ENCODE measurements at regions of chr1 and their contacts with region 1.

Region 1: DNA sequence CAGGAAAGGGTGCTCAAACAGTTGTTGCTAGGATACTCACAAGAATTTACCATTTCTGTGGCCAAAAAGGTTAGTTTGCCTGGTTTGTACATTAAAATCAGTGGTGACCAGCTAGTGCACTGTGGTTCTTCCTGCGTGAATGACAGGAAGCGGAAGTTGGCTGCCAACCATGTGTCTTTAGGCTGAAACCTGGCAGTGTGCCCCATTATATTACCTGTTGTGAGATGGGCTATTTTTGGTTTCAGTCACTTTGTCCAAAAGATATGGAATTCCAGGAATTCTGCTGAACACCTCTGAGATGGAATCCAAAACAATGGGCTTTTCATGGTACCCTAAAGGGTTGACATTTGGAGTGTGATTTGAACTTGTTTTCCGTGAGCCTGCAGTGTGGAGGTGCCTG is 13.6 kb downstream of the MAP3K21 start:
- DNase-seq: peak; percentile 50
- H3K4me3 Mint-ChIP-seq: no peak overlapping the region
- H3K27ac Mint-ChIP-seq: no peak overlapping the region
- H3K4me1 Mint-ChIP-seq: peaks cover 12% of the 10 kb centered on the region
- H3K27me3 Mint-ChIP-seq: no peaks in the 10 kb centered on the region
- CTCF ChIP-seq: no peak

Region 2: DNA sequence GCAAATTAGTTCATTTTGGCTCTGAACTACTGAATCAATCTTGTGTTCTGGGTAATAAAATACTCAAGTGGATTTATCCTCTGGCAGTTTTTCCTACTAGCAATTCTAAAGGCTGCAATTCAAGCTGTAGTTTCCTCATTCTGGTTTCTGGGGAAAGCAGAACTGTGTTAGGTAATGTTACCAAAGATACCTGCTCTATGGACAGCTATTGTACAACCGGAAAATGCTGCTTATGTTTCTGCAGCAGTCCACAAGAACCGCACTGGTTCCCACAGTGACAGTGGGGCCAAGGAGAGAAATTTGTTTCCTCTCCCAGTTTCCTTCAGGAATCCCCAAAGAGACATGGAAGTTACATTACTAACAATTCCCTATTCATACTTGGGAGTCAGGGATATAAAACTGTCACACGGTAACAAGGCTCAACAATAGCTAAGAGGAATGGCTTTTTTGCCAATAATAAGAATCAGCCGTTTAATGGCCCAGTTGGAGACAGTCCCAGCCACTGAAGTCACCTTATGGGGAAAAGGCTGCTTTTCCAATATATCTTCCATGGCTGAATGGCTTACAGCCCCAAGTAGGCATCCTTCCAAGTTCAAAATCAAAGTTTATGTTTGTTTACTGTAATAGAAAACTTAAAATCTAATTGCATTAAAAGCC is 98.2 kb before region 1 on chr1:
- CTCF ChIA-PET with region 1: no interaction called
- POLR2A ChIA-PET with region 1: no interaction called
- intact Hi-C with region 1: no loop called
- DNase-seq: no peak
- H3K4me3 Mint-ChIP-seq: no peak overlapping the region
- H3K27ac Mint-ChIP-seq: no peak overlapping the region
- H3K4me1 Mint-ChIP-seq: peaks cover 9% of the 10 kb centered on the region
- H3K27me3 Mint-ChIP-seq: no peaks in the 10 kb centered on the region
- CTCF ChIP-seq: no peak

Region 3: DNA sequence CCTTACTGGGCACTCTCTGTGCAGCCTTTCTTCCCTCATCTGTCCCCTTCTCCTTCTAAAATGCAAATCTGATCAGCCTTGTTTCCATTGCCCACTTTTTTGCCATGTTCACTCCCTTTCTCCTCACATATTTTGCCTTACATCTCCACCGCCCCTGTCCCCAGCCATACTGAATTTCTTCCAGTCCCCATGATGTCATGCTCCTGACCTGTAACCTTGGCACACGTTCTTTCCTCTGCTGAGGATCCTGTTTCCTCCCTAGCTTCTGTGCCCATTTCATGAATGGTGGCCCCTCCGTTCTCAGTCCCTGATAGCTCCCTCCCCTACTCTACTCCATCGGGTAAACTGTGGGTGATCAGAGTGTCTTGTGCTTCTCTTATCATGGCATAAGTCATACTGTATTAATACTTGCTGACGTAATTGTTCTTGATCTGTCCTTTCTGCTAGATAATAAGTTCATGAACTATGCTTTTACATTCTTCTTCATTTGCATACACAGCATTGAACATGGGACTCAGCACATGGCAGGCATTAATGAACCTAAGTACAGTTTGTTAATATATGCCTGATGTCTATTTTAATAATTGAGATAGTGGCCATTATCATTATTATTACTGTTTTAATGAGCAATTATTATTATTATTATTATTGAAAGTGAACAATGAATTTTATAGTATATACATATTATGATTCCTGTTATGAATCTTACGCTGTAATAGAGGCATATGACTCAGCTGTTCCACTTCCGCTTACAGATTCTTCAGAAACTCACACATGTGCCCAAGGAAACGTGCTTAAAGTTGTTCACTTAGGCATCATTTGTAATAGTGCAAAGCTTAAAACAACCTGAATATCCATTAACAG is 15.0 kb after region 1 on chr1:
- CTCF ChIA-PET with region 1: interaction called, 3 read pairs
- POLR2A ChIA-PET with region 1: interaction called, 11 read pairs
- intact Hi-C with region 1: no loop called
- DNase-seq: no peak
- H3K4me3 Mint-ChIP-seq: no peak overlapping the region
- H3K27ac Mint-ChIP-seq: no peak overlapping the region
- H3K4me1 Mint-ChIP-seq: peaks cover 6% of the 10 kb centered on the region
- H3K27me3 Mint-ChIP-seq: no peaks in the 10 kb centered on the region
- CTCF ChIP-seq: no peak